ENCODE measurements at regions of chr12 and their contacts with region 1.

Region 1: DNA sequence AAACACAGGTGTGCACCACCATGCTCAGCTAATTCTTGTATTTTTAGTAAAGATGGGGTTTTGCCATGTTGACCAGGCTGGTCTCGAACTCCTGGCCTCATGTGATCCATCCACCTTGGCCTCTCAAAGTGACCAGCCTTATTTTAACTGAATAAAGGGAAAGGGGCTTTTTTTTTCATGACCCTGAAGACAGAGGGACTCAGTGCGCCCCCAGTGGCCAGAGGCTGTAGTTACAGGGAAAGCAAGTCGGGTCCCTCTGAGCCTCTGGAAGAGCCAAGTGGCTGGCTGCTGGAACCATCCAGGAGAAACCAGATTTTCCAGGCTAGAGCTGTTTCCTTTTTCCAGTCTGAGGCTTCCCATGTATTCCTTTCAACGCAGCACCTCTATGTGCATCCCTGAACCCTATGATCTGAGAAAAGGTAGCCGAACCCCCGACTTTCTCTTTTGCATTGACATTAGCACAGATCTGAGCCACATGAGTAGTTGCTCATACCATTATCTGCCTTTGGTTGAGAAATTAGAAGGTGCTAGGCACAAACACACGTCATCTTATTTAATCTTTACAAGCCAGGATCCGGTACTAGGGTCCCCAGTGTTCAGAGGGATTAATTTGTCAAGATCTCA is 342.7 kb downstream of the CACNA1C start:
- DNase-seq: peak; percentile 78
- H3K4me3 ChIP-seq: peak overlapping the region in 1 of 2 experiments; percentile 39; a peak in 1 of 4 replicates
- H3K27ac ChIP-seq: no peak overlapping the region
- H3K4me1 ChIP-seq: no peaks in the 10 kb centered on the region; a peak in 1 of 4 replicates
- H3K27me3 ChIP-seq: no peaks in the 10 kb centered on the region; the same call in 1 of the 2 replicates
- CTCF ChIP-seq: peak; percentile 95
- EP300 ChIP-seq: no peak
- RAD21 ChIP-seq: peak; percentile 65

Region 2: DNA sequence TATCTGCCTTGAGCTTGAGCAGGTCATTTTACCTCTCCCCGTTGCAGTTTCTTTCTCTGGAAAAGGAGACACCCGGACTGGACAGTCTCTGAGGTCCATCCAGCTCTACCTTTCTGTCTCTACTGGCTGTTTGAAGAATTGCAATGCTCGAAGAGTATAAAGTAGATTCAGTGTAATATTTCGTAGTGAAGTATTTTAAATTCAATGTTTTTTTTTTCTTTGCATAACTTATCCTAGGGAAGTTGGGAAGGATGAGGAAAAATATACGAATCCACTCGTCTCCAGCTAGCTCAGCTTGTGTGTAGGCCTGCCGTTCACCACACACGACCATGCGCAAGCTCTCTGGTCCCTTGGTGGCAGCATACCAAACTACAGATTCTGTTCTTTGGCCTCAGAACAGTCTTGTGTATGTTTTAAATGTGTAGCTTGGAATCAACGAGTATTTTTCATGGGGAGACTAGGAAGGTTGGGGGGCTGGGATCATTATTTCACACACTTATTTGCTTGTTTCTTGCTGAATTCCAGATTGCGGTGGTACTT is 34.8 kb before region 1 on chr12:
- CTCF ChIA-PET with region 1: interaction called, 30 read pairs
- POLR2A ChIA-PET with region 1: no interaction called
- DNase-seq: no peak
- H3K4me3 ChIP-seq: no peak overlapping the region
- H3K27ac ChIP-seq: no peak overlapping the region
- H3K4me1 ChIP-seq: peaks cover 13 to 15% of the 10 kb centered on the region in 2 experiments; a peak in 2 of 4 replicates
- H3K27me3 ChIP-seq: no peaks in the 10 kb centered on the region
- CTCF ChIP-seq: peak; percentile 41
- EP300 ChIP-seq: no peak
- RAD21 ChIP-seq: no peak

Region 3: GRCh38 chr12:2372735-2373134 is 22.7 kb before region 1 on chr12:
- CTCF ChIA-PET with region 1: interaction called, 21 read pairs
- POLR2A ChIA-PET with region 1: no interaction called
- DNase-seq: no peak
- H3K4me3 ChIP-seq: no peak overlapping the region
- H3K27ac ChIP-seq: no peak overlapping the region
- H3K4me1 ChIP-seq: peaks cover 0 to 11% of the 10 kb centered on the region in 2 experiments; a peak in 1 of 4 replicates
- H3K27me3 ChIP-seq: no peaks in the 10 kb centered on the region
- CTCF ChIP-seq: no peak
- EP300 ChIP-seq: no peak
- RAD21 ChIP-seq: no peak

Region 4: DNA sequence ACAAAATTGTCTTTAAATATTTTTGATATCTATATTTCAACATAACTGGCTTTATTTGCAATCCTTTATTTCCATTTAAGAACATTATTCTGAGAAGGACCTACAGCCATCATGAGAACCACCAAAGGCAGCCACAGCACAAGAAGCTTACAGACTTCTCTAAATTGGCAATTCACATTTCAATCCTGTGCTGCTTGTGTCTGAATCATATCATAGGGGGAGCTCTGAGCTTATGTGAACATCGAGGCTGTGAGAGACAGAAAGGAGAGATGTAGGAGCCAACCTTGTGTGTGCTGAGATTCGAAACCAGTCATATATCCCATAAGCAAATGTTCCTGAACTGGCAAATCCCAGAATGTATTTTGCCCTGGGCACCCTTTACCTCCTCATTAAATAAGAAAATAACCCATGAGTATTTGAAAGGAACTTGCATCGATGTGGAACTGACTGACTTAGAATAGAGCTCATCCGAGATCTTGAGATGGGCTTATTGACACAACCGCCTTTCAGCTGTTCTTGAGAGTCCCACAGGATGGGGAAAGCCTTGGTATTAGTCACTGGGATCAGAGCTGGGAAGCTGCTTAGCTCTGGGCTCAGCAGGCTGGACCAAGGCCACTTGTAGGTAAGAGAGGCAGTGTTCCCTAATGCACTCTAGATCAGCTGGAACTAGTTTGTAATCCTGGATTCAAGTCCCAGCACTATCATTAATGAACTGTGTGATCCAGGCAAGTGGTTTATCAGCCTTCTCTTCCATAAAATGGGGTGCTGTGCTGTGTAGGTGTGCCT is 12.9 kb before region 1 on chr12:
- CTCF ChIA-PET with region 1: interaction called, 19 read pairs
- POLR2A ChIA-PET with region 1: no interaction called
- DNase-seq: no peak
- H3K4me3 ChIP-seq: no peak overlapping the region
- H3K27ac ChIP-seq: no peak overlapping the region
- H3K4me1 ChIP-seq: peaks cover 0 to 20% of the 10 kb centered on the region in 2 experiments; a peak in 2 of 4 replicates
- H3K27me3 ChIP-seq: no peaks in the 10 kb centered on the region
- CTCF ChIP-seq: no peak
- EP300 ChIP-seq: no peak
- RAD21 ChIP-seq: peak; percentile 26; the same call in 1 of the 2 replicates